Astrocyte of the cerebellum (primary cell): ENCODE measurements at regions of chr1 and their contacts with region 1.

Region 1: DNA sequence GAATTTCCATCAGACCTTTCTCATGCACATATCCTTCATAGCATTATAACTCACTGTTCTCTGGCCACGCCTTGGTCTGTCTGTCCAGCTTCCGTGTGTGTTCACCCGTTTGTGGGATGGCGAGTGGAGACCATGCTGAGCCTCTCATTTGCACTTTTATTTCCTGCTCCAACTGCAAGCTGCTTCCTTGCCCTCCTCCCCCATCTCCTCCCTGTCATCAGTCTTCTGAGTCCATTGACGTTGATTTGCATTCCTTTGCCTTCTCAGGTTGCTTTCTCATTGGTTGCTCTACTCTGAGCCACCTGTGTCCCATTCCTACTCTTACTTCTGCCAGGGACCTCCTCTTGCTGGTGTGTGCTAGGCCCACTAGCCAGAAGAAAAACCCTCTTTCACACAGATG is 146.4 kb downstream of the NOS1AP start:
- DNase-seq: no peak
- H3K4me3 ChIP-seq: no peak overlapping the region
- CTCF ChIP-seq: no peak

Region 2: DNA sequence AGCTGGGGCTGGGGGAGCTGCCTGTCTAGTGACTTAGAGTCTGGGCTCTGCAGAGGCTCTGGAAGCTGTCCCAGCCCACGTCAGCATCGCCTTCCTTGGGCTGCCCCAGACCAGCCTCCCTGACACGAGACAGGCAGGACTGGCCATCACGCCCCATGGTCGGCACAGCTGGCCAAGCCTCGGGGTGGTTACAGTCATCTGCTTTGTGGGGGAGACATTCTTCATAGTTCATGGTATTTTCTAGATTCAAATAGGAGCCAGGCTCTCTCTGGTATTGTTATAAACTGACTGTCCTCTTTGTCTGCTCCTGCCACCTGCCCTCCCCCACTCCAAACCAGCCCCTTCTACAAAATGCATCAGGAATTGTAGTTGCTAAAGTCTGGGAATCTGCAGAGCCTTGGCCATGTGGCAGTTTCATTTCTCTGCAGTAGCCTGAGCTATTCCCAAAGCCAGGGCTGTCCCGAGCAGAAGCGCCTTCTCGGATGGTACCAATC is 221.7 kb before region 1 on chr1:
- in situ Hi-C with region 1: no loop called
- DNase-seq: peak; percentile 61
- H3K4me3 ChIP-seq: no peak overlapping the region
- CTCF ChIP-seq: no peak

Region 3: DNA sequence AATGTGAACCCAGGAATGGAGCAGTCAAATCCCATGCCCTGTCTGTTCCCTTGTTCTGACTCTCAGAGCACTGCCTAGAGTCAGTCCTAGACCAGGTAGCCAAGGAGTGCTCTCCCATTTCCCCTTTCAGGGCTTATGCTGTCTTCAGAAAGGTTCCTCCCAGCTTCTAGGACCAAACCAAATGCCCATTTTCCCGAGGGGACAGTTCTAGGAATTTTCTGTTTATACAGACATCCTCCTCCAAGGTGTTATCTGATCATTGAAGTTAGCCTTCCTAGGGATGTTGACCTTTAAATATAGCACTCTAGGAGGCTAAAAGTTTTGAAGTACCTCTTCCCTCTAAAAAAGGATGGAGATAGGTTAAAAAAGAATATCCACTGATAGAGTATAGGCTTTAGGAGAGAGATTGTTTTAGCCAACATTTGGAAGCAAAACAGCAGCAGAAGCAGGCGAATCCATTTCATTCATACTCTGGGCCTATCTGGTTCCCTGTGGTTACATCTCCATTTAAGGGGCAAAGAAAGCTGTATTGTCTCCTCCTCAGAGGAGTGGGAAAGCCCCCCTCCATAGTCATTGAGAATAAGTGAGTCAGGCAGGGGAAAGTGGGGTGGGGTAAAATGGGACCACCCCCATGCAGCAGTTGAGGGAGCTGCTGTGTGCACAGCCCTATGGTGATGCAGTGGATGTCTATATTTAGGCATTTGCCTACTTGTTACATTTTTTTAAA is 34.3 kb after region 1 on chr1:
- in situ Hi-C with region 1: loop called (anchors 5 kb)
- DNase-seq: no peak
- H3K4me3 ChIP-seq: no peak overlapping the region
- CTCF ChIP-seq: no peak

Region 4: GRCh38 chr1:162391790-162392563 is 176.1 kb after region 1 on chr1:
- in situ Hi-C with region 1: loop called (anchors 5 kb)
- DNase-seq: peak; percentile 24
- H3K4me3 ChIP-seq: no peak overlapping the region
- CTCF ChIP-seq: peak; percentile 81